Naive thymus-derived CD4-positive, alpha-beta T cell (primary cell): ENCODE measurements at regions of chr1 and their contacts with region 1.

Region 1: GRCh38 chr1:202160377-202160940 is at the start of gene PTPN7:
- DNase-seq: peak; percentile 58 to 84 (median 80)
- ATAC-seq: peak; percentile 80
- H3K4me3 ChIP-seq: peak within 1 kb of the TSS; percentile 98
- H3K4me3 Mint-ChIP-seq: peak within 1 kb of the TSS; percentile 91 to 99 (median 98)
- H3K27ac ChIP-seq: peak within 1 kb of the TSS; percentile 90
- H3K27ac Mint-ChIP-seq: peak within 1 kb of the TSS; percentile 97 to 99 (median 98)
- H3K4me1 ChIP-seq: peaks cover 77 to 84% of the 10 kb centered on the region in 2 donors
- H3K4me1 Mint-ChIP-seq: peaks cover 47 to 98% (median 82%) of the 10 kb centered on the region in 7 donors
- H3K27me3 ChIP-seq: no peaks in the 10 kb centered on the region
- H3K27me3 Mint-ChIP-seq: no peaks in the 10 kb centered on the region
- total RNA-seq, gene PTPN7: 43.2 to 258 (median 97.0) TPM

Region 2: DNA sequence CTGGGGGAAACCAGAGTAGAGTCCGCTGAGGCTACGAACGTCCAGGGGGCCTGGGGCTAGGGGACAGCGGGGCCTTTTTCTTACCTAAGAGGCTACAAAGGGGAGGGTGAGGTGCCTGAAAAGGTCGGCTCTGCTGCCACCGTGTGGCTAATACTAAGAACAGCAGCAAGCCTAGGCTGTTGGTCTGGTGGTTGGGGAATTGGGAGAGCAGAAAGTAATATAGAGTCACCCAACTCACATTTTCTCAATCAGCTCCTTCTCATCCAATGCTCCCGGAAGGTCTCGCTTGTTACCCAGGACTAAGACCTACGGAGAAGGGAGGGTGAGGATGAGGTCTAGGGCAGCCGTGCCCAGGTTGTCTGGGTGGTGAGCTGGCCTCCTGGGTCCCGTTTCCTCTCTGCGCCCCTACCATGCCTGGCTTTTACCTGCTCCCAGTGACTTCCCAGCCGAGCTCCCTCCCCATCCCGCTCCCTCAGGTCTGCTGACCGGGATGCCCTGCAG is 25.2 kb before region 1 on chr1:
- CTCF ChIA-PET with region 1: interaction called, 12 read pairs
- POLR2A ChIA-PET with region 1: no interaction called
- intact Hi-C with region 1: no loop called
- DNase-seq: peak in 7 of 9 donors; percentile 27 to 63 (median 53)
- ATAC-seq: peak; percentile 92
- H3K4me3 ChIP-seq: no peak overlapping the region
- H3K4me3 Mint-ChIP-seq: no peak overlapping the region
- H3K27ac ChIP-seq: no peak overlapping the region
- H3K27ac Mint-ChIP-seq: peak overlapping the region in 2 of 9 donors; percentile 24 to 43
- H3K4me1 ChIP-seq: no peaks in the 10 kb centered on the region
- H3K4me1 Mint-ChIP-seq: peaks cover 4 to 15% (median 8%) of the 10 kb centered on the region in 7 donors
- H3K27me3 ChIP-seq: no peaks in the 10 kb centered on the region
- H3K27me3 Mint-ChIP-seq: no peaks in the 10 kb centered on the region

Region 3: DNA sequence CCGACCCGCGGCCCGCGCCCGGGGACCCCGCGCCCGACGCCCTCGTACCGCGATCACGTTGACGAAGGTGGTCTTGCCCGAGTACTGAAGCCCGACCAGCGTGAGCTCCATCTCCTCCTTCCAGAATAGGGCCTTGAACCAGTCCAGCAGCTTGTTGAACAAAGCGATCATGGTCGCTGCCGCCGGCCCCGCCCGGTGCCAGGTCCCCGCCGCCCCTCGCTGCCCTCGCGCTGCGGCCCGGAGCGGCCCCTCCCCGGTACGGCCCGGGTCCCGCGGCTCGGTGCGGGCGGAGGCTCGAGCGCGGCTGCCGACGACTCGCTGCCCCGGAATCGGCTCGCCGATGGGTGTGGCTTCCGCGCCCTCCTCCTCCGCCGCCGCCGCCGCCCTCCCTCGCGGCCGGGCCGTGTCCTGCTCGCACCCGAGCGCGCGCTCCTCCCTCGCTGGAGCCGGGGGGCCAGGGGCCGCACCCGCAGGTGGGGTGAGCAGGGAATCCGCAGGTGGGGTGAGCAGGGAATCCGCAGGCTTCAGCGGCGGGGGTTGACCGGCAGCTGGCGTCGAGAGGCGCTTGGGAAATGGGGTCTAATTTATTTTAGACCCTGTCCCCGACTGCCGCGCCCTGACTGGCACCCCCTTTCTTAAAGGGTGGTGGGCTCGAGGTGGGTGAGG is 15.9 kb before region 1 on chr1 and contains the start of gene ARL8A:
- CTCF ChIA-PET with region 1: interaction called, 7 read pairs
- POLR2A ChIA-PET with region 1: interaction called, 54 read pairs
- intact Hi-C with region 1: loop called (anchors 1 kb)
- DNase-seq: peak; percentile 47 to 81 (median 62)
- ATAC-seq: peak; percentile 81
- H3K4me3 ChIP-seq: peak within 1 kb of the TSS; percentile 83
- H3K4me3 Mint-ChIP-seq: peak within 1 kb of the TSS; percentile 90 to 98 (median 93)
- H3K27ac ChIP-seq: peak within 1 kb of the TSS; percentile 83
- H3K27ac Mint-ChIP-seq: peak within 1 kb of the TSS; percentile 85 to 98 (median 92)
- H3K4me1 ChIP-seq: peaks cover 14 to 21% of the 10 kb centered on the region in 2 donors
- H3K4me1 Mint-ChIP-seq: peaks cover 16 to 44% (median 38%) of the 10 kb centered on the region in 7 donors
- H3K27me3 ChIP-seq: no peaks in the 10 kb centered on the region
- H3K27me3 Mint-ChIP-seq: no peaks in the 10 kb centered on the region
- total RNA-seq, gene ARL8A: 38.2 to 99.4 (median 54.3) TPM

Region 4: DNA sequence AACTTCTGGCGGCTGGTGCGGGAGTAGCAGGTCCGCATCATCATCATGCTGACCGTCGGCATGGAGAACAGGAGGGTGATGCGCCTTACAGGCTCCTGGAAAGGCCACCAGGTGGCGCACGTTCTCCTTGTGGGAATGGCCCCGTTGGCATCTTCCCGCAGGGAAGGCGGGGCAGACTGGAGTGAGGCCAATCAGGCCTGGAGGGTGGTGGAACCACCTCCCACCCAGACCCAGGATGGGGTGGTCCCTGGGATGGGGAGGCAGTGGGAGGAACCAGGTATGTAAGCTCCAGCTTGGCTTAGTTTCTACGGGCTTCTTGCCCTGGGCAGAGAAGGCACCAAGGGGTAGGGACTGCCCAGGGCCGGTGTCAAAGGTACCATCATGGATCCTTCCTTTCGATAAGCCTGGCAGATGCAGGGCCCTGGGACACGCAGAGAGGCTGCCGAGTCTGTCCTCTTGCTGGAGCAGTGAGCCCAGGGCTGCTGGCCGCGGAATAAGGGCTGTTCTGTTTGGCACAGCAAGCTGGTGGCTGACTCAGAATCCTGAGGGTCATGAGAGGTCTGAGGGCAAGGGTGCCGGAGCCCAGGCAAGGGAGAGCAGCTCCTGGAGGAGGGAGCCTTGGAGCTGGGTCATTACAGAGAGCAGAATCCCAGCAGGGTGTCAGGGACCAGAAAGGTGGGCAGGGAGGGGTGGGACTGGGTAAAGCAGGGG is 24.4 kb after region 1 on chr1:
- CTCF ChIA-PET with region 1: interaction called, 7 read pairs
- POLR2A ChIA-PET with region 1: no interaction called
- intact Hi-C with region 1: loop called (anchors 1 to 2 kb)
- DNase-seq: peak in 6 of 9 donors; percentile 20 to 77 (median 48)
- ATAC-seq: peak; percentile 71
- H3K4me3 ChIP-seq: no peak overlapping the region
- H3K4me3 Mint-ChIP-seq: no peak overlapping the region
- H3K27ac ChIP-seq: no peak overlapping the region
- H3K27ac Mint-ChIP-seq: peak overlapping the region in 1 of 9 donors; percentile 41
- H3K4me1 ChIP-seq: no peaks in the 10 kb centered on the region
- H3K4me1 Mint-ChIP-seq: peaks cover 9 to 14% (median 12%) of the 10 kb centered on the region in 7 donors
- H3K27me3 ChIP-seq: no peaks in the 10 kb centered on the region
- H3K27me3 Mint-ChIP-seq: peaks cover 0 to 6% (median 0%) of the 10 kb centered on the region in 5 donors

Region 5: DNA sequence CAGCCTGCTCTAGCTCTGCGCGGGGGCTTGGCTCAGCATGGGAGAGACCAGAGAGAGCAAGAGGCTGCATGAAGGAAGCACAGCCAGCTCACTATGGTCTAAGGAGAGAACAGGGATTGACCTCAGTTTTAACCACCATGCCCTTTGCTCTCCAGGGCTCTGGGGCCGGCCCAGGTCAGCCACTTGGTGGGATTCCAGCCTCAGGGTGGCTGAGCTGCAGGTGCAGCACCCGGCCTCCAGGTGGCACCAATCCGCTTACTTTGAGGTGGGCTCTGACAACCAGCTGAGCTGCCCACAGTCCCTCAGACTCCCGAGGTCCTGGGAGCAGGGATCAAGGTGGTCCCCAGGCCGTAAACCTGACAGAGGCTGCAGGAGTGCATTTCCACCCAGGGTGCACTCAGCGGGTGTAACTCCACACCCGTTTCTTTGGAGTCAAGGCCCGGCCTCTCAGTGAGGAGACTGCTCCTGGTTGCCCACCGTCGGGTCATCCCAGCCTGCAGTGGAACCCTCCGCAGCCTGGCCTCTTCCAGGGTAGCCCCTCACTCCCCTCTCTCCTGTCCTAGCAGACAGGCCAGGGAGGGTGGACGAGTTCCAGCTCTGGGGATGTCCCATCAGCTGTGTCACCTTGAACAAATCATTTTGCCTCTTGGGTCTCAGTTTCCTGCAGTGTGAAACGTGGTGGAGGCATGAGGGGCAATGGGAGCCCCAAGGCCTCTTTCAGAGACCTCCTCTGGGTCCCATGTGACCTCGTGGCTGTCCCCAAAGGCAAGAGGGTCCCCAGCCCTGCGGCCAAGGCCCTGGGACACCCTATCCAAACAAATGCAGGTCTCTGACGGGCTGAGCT is 32.5 kb after region 1 on chr1:
- CTCF ChIA-PET with region 1: interaction called, 7 read pairs
- POLR2A ChIA-PET with region 1: no interaction called
- intact Hi-C with region 1: loop called in 1 of 2 experiments (anchors 1 kb)
- DNase-seq: peak in 8 of 9 donors; percentile 18 to 57 (median 40)
- ATAC-seq: peak; percentile 48
- H3K4me3 ChIP-seq: no peak overlapping the region
- H3K4me3 Mint-ChIP-seq: peak overlapping the region in 3 of 10 donors; percentile 52 to 74 (median 54)
- H3K27ac ChIP-seq: no peak overlapping the region
- H3K27ac Mint-ChIP-seq: no peak overlapping the region
- H3K4me1 ChIP-seq: peaks cover 6 to 8% of the 10 kb centered on the region in 2 donors
- H3K4me1 Mint-ChIP-seq: peaks cover 1 to 16% (median 7%) of the 10 kb centered on the region in 7 donors
- H3K27me3 ChIP-seq: no peaks in the 10 kb centered on the region
- H3K27me3 Mint-ChIP-seq: peaks cover 21 to 42% (median 26%) of the 10 kb centered on the region in 5 donors

Region 6: GRCh38 chr1:202968840-202969295 is 808.4 kb after region 1 on chr1:
- CTCF ChIA-PET with region 1: no interaction called
- POLR2A ChIA-PET with region 1: no interaction called
- intact Hi-C with region 1: loop called in 1 of 2 experiments (anchors 5 kb)
- DNase-seq: peak in 7 of 9 donors; percentile 24 to 64 (median 47)
- ATAC-seq: peak; percentile 73
- H3K4me3 ChIP-seq: no peak overlapping the region
- H3K4me3 Mint-ChIP-seq: peak overlapping the region in 9 of 10 donors; percentile 40 to 98 (median 94)
- H3K27ac ChIP-seq: peak overlapping the region; percentile 83
- H3K27ac Mint-ChIP-seq: peak overlapping the region in 8 of 9 donors; percentile 80 to 96 (median 94)
- H3K4me1 ChIP-seq: peaks cover 14 to 20% of the 10 kb centered on the region in 2 donors
- H3K4me1 Mint-ChIP-seq: peaks cover 15 to 34% (median 27%) of the 10 kb centered on the region in 7 donors
- H3K27me3 ChIP-seq: no peaks in the 10 kb centered on the region
- H3K27me3 Mint-ChIP-seq: peaks cover 0 to 15% (median 0%) of the 10 kb centered on the region in 5 donors

Region 7: DNA sequence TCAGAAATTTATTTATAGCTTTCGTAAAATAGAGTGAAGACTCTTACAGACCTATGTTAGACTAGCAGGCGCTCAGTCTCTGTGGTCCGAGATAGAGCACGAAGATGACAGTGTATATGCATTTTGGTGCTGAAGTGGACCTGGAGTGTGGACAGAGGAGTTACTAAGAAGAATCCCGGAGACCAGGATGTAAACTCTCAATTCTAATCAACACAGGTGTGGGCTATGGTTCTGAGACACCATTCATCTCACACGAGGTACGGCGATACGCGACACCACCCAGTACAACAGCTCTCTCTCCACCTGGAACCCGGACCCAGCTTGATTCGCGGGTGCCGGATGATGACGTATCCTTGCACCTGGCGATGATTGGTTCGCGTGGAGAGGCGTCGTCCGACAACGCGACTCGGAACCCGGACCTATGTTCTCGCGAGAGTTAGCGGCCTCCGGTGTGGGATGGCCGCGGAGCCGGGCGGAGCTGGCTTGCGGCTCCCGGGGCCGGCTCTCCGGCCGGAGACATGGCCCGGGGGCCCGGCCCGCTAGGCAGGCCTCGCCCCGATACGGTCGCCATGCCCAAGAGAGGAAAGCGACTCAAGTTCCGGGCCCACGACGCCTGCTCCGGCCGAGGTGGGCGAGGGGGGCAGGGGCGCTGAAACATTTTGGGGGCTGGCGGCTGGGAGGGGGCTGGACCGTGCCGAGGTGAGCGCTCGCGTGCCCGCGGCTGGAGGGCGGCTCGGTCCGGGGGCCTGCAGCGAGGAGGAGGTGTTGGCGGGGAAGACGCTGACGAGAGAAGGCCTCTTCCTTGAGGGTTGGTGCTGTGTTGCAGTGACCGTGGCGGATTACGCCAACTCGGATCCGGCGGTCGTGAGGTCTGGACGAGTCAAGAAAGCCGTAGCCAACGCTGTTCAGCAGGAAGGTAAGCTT is 846.8 kb after region 1 on chr1 and contains the start of gene TMEM183A:
- CTCF ChIA-PET with region 1: no interaction called
- POLR2A ChIA-PET with region 1: no interaction called
- intact Hi-C with region 1: loop called in 1 of 2 experiments (anchors 10 kb)
- DNase-seq: peak; percentile 77 to 95 (median 92)
- ATAC-seq: peak; percentile 96
- H3K4me3 ChIP-seq: peak within 1 kb of the TSS; percentile 91
- H3K4me3 Mint-ChIP-seq: peak within 1 kb of the TSS; percentile 91 to 100 (median 96)
- H3K27ac ChIP-seq: peak within 1 kb of the TSS; percentile 90
- H3K27ac Mint-ChIP-seq: peak within 1 kb of the TSS; percentile 93 to 99 (median 98)
- H3K4me1 ChIP-seq: peaks cover 10 to 14% of the 10 kb centered on the region in 2 donors
- H3K4me1 Mint-ChIP-seq: peaks cover 24 to 46% (median 36%) of the 10 kb centered on the region in 7 donors
- H3K27me3 ChIP-seq: no peaks in the 10 kb centered on the region
- H3K27me3 Mint-ChIP-seq: peaks cover 0 to 4% (median 0%) of the 10 kb centered on the region in 5 donors
- total RNA-seq, gene TMEM183A: 61.4 to 134 (median 77.0) TPM